ENCODE measurements at regions of chr14 and their contacts with region 1.

Region 1: DNA sequence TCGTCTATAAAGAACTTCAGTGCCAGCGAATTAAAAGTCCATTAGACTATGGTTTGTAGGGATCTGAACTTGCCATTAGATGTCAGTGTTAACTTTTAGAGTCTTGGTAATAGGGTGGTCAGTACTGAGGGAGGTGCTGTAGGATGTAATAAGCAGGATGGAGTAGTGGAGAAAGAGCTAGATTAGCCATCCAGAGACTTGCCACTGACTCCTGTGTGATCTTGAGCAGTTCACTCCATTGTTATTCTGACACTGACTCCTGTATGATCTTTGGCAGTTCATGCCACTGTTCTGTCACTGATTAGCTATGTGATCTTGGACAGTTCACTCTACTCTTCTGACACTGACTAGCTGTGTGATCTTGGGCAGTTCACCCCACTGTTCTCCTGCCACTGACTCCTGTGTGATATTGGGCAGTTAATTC is 133.6 kb downstream of the TTLL5 start:
- DNase-seq: peak; percentile 57
- ATAC-seq: peak; percentile 95
- H3K4me3 ChIP-seq: no peak overlapping the region
- H3K27ac ChIP-seq: no peak overlapping the region
- H3K4me1 ChIP-seq: no peaks in the 10 kb centered on the region
- H3K27me3 ChIP-seq: no peaks in the 10 kb centered on the region
- CTCF ChIP-seq: peak; percentile 70

Region 2: DNA sequence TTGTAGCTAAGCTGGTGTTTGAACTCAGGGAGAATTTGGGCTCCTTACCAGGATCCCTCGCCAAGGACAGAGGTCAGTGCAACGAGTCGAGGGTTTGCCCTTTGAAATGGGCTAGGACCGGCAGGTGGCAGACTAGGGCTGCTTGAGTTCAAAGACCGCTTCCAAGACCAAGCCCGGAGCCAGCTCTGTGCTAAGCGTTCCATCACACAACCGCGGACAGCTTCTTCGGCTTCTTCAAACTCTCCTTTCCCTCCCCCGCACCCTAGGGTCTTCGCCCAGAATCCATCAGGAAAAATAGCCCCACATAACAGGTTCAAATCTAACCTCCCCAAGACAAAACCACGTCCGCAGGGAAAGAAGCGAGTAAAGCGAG is 216.9 kb before region 1 on chr14:
- CTCF ChIA-PET with region 1: no interaction called
- POLR2A ChIA-PET with region 1: no interaction called
- intact Hi-C with region 1: loop called (anchors 5 kb)
- DNase-seq: peak; percentile 87
- ATAC-seq: peak; percentile 89
- H3K4me3 ChIP-seq: peak overlapping the region; percentile 82
- H3K27ac ChIP-seq: no peak overlapping the region
- H3K4me1 ChIP-seq: peaks cover 9% of the 10 kb centered on the region
- H3K27me3 ChIP-seq: no peaks in the 10 kb centered on the region
- CTCF ChIP-seq: peak; percentile 86

Region 3: DNA sequence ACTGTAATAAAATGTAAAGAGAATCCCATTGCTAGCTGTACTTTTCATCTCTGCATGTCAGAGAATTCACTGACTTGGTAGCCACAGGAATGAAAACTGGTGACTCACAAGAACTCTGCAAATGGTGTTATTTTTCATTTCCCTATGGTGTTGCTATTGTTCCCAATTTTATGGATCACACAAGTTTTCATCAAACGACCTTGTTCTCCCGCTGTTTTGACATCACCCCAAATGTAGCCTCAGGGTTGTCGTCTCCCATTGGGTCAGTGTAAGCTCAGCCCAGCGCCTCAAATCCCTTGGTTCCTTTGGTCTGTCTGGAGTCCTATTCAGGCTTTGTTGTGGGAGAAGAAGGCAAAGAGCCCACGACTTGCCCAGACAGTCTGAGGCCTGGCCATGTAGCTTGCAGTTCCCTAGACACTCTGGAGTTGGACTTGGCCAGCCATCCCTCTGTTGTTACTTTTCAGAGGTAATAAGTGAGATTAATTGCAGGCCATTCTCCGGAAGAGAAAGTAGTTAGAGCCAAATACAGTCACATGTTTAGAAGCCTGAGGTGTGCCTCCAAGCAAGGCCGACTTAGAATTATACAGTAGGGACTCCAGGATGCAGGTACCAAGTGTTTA is 28.0 kb after region 1 on chr14:
- CTCF ChIA-PET with region 1: interaction called, 9 read pairs
- POLR2A ChIA-PET with region 1: no interaction called
- intact Hi-C with region 1: loop called (anchors 1 kb)
- DNase-seq: peak; percentile 81
- ATAC-seq: peak; percentile 80
- H3K4me3 ChIP-seq: no peak overlapping the region; the same call in 1 of the 2 replicates
- H3K27ac ChIP-seq: peak overlapping the region; percentile 97
- H3K4me1 ChIP-seq: peaks cover 52% of the 10 kb centered on the region
- H3K27me3 ChIP-seq: no peaks in the 10 kb centered on the region
- CTCF ChIP-seq: no peak

Region 4: DNA sequence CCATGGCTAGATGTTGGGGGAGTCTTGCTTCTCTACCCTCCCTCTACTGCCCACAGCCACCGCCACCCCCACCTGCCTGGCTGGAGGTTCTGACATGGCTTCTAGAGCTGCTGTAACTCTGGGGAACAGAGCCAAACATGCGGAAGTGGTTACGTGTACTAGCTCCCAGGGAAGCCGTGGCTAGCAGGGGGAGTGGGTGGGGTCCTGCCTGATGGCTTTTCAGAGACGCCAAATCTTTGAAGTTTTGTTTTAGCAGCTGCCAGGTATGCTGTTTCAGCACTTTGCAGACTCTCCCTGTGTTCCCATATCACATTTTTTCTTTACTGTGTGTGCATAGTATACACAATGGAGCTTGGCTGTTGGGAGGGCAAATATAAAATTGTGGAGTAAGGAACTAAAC is 36.8 kb after region 1 on chr14:
- CTCF ChIA-PET with region 1: interaction called, 19 read pairs
- POLR2A ChIA-PET with region 1: no interaction called
- intact Hi-C with region 1: no loop called
- DNase-seq: peak; percentile 87
- ATAC-seq: peak; percentile 62
- H3K4me3 ChIP-seq: peak overlapping the region; percentile 63
- H3K27ac ChIP-seq: peak overlapping the region; percentile 99
- H3K4me1 ChIP-seq: peaks cover 56% of the 10 kb centered on the region
- H3K27me3 ChIP-seq: no peaks in the 10 kb centered on the region
- CTCF ChIP-seq: no peak

Region 5: GRCh38 chr14:75875958-75876357 is 81.3 kb after region 1 on chr14:
- CTCF ChIA-PET with region 1: no interaction called
- POLR2A ChIA-PET with region 1: no interaction called
- intact Hi-C with region 1: no loop called
- DNase-seq: no peak
- ATAC-seq: no peak
- H3K4me3 ChIP-seq: no peak overlapping the region
- H3K27ac ChIP-seq: peak overlapping the region; percentile 96
- H3K4me1 ChIP-seq: peaks cover 43% of the 10 kb centered on the region
- H3K27me3 ChIP-seq: no peaks in the 10 kb centered on the region
- CTCF ChIP-seq: no peak

Region 6: GRCh38 chr14:75906676-75907280 is 112.2 kb after region 1 on chr14:
- CTCF ChIA-PET with region 1: interaction called, 12 read pairs
- POLR2A ChIA-PET with region 1: no interaction called
- intact Hi-C with region 1: loop called (anchors 2 kb)
- DNase-seq: peak; percentile 72
- ATAC-seq: no peak
- H3K4me3 ChIP-seq: no peak overlapping the region
- H3K27ac ChIP-seq: no peak overlapping the region
- H3K4me1 ChIP-seq: peaks cover 9% of the 10 kb centered on the region; the same call in 1 of the 2 replicates
- H3K27me3 ChIP-seq: no peaks in the 10 kb centered on the region
- CTCF ChIP-seq: peak; percentile 96